ENCODE measurements at regions of chr1 and their contacts with region 1.

Region 1: GRCh38 chr1:225652729-225653462 is at the start of gene ENAH:
- DNase-seq: no peak
- ATAC-seq: peak; percentile 76
- H3K4me3 ChIP-seq: peak within 1 kb of the TSS; percentile 54 to 75
- H3K27ac ChIP-seq: peak within 1 kb of the TSS; percentile 84
- H3K4me1 ChIP-seq: peaks cover 40 to 53% of the 10 kb centered on the region in 2 experiments
- H3K27me3 ChIP-seq: no peaks in the 10 kb centered on the region
- CTCF ChIP-seq: no peak
- POLR2A ChIP-seq: peak; percentile 76
- RAD21 ChIP-seq: no peak
- total RNA-seq, gene ENAH: 100 TPM

Region 2: DNA sequence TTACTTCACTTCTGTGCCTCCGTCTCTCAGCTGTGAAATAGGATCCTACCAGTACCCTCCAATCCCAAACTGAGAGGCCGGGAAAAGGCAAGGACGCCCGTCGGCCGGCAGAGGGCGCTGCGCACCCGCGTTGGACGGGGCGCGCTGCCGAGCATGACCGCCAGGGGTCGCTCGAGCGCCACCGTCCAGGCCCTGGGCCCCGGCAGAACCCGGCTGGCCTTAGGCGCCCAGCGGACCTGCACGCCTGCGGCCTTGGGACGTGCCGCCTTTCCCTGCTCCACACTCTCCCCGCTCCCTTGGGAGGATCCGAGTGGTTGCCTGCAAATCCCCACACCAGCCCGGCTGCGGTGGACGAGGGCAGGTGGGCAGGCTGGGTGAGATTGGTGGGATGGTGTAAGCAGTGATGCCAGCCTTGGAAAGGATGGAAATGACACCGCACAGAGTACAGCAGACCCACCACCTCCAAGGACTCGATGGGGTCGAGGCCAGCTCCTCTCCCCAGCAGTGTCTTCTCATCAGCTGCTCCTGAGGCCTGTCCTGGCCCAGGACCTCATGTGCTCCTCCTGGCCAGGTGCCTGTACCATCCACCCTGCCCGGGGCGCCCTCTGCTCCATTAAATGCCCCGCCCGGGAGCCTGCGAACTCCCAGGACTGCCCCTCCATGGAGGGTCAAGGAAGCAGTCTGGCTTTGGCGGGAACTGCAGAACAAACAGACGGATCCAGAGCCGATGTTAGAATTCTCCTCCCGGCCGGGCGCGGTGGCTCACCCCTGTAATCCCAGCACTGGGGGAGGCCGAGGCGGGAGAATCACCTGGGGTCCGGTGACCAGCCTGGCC is 177.7 kb before region 1 on chr1:
- CTCF ChIA-PET with region 1: interaction called, 8 read pairs
- POLR2A ChIA-PET with region 1: no interaction called
- RAD21 ChIA-PET with region 1: no interaction called
- intact Hi-C with region 1: loop called (anchors 5 kb)
- DNase-seq: peak; percentile 40
- ATAC-seq: peak; percentile 92
- H3K4me3 ChIP-seq: no peak overlapping the region
- H3K27ac ChIP-seq: no peak overlapping the region; the same call in 1 of the 2 replicates
- H3K4me1 ChIP-seq: peaks cover 3 to 10% of the 10 kb centered on the region in 2 experiments; a peak in 3 of 4 replicates
- H3K27me3 ChIP-seq: no peaks in the 10 kb centered on the region
- CTCF ChIP-seq: peak; percentile 100
- POLR2A ChIP-seq: no peak
- RAD21 ChIP-seq: peak; percentile 100

Region 3: DNA sequence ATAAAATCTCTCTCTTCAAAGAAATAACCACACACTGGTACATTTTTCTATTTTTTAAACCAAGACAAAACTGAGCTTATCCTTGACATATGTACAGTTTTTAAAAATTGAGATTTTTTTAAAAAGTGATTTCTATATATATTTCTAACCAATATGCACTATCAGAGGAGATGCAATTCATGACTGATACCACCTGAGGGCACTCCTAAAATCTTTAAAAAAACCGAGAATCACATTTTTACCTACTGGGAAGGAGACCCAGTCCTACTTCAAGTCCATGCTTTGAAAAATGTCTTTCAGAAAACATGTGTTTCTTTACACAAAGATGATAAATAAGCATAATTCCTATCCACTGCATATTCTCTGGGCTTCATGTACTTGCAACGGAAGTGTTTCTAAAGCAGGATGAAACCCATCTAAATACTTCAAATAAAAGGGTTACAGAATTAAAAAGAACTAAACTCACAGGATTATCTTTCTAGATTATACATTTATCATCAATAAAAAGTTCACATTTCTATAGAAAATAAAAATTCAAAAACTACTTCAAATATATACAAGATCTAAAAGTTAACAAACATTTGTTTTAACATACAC is 98.6 kb before region 1 on chr1:
- CTCF ChIA-PET with region 1: no interaction called
- POLR2A ChIA-PET with region 1: no interaction called
- RAD21 ChIA-PET with region 1: no interaction called
- intact Hi-C with region 1: loop called (anchors 10 kb)
- DNase-seq: peak; percentile 18
- ATAC-seq: peak; percentile 54; the same call in 1 of the 2 replicates
- H3K4me3 ChIP-seq: no peak overlapping the region
- H3K27ac ChIP-seq: no peak overlapping the region
- H3K4me1 ChIP-seq: no peaks in the 10 kb centered on the region
- H3K27me3 ChIP-seq: no peaks in the 10 kb centered on the region
- CTCF ChIP-seq: peak; percentile 54 to 62 (median 61); a peak in 5 of 6 replicates
- POLR2A ChIP-seq: no peak
- RAD21 ChIP-seq: peak; percentile 70

Region 4: GRCh38 chr1:225685476-225686176 is 32.7 kb after region 1 on chr1:
- CTCF ChIA-PET with region 1: no interaction called
- POLR2A ChIA-PET with region 1: no interaction called
- RAD21 ChIA-PET with region 1: no interaction called
- intact Hi-C with region 1: no loop called
- DNase-seq: no peak
- ATAC-seq: no peak
- H3K4me3 ChIP-seq: no peak overlapping the region
- H3K27ac ChIP-seq: no peak overlapping the region
- H3K4me1 ChIP-seq: no peaks in the 10 kb centered on the region; a peak in 1 of 4 replicates
- H3K27me3 ChIP-seq: no peaks in the 10 kb centered on the region
- CTCF ChIP-seq: no peak
- POLR2A ChIP-seq: no peak
- RAD21 ChIP-seq: no peak

Measured in HCT116 (cell line).